Breast epithelium (tissue), 4 donors: ENCODE measurements at regions of chr7 and their contacts with region 1.

Region 1: GRCh38 chr7:683526-684205 is 42.8 kb upstream of the DNAAF5 start:
- DNase-seq: peak in 1 of 2 donors; percentile 31
- H3K4me3 ChIP-seq: no peak overlapping the region
- H3K27ac ChIP-seq: no peak overlapping the region
- H3K4me1 ChIP-seq: no peaks in the 10 kb centered on the region
- H3K27me3 ChIP-seq: no peaks in the 10 kb centered on the region
- CTCF ChIP-seq: no peak
- POLR2A ChIP-seq: no peak

Region 2: DNA sequence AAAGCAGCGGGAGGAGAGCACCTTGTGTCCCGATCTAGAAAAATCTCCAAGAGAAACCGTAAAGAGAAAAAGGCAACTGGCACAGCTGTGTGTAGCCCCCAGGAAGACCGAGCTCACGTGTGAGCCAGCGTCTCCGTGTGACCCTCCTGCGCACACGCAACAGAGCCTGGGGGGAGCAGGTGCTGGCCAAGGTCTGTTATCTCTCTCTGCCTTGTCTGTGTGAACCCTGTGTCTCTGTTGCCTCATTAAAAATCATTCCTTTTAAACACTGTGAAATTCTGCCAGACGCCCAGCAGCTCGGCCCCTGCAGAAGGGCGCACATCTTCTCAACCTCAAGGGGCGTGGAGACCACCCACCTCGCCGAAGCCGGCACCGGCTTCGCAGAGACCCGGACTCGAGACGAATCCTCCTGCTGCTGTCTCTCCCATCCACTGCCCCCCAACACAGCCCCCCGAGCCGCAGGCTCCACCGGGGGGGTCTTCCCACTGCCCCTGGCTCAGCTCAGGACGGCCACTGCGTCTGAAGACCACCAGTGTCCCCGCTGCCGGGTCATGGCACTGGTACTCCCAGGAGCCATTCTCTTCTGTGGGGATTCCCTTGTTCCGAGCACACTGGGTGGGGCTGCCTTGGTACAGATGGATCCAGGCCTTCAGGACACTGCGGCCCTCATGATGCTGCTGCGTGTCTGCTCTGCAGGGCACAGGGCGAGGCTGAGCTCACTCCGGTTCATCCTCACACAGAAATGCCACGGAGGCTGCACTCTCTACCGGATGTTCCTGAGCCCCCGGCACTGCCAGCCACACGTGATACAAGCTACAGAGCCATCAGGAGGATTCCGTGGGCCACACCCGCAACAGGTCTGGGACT is 51.5 kb before region 1 on chr7:
- intact Hi-C with region 1: no loop called
- DNase-seq: peak in 1 of 2 donors; percentile 45
- H3K4me3 ChIP-seq: no peak overlapping the region
- H3K27ac ChIP-seq: no peak overlapping the region
- H3K4me1 ChIP-seq: no peaks in the 10 kb centered on the region
- H3K27me3 ChIP-seq: no peaks in the 10 kb centered on the region
- CTCF ChIP-seq: no peak
- POLR2A ChIP-seq: no peak

Region 3: GRCh38 chr7:665736-666453 is 17.8 kb before region 1 on chr7:
- intact Hi-C with region 1: loop called (anchors 1 kb)
- DNase-seq: no peak
- H3K4me3 ChIP-seq: peak overlapping the region in 1 of 3 donors; percentile 4
- H3K27ac ChIP-seq: peak overlapping the region; percentile 42 to 83
- H3K4me1 ChIP-seq: no peaks in the 10 kb centered on the region
- H3K27me3 ChIP-seq: no peaks in the 10 kb centered on the region
- CTCF ChIP-seq: no peak
- POLR2A ChIP-seq: no peak